ENCODE measurements at regions of chr7 and their contacts with region 1.

Region 1: DNA sequence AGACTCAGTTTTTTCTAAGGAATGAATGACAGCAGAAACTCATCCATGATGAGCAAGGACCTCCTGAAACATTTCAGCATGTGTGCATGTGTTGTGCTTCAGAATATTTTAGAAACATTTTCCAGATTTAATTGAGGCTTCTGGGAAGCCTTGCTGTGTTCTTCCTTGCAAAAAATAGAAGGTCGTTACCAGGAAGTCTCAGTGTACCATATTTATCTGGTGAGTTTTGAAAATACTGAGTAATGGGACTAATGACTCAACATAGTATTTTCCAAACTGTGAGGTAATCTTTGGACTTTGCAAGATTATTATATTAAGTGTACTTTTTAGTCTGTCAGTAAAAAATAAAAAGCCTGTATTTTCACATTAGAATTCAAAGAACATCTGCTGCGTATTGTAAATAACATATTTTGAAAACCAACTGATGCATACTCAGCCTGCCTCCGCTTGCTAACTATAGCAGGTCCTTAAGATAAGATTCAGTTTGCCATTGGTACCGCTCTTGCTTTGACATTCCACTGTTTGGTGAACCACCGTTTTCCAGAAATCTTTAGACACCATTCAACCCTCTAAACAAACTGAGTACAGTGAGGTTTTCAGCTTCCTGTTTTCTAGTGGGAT is 739.6 kb upstream of the GALNT17 start:
- DNase-seq: no peak
- H3K4me3 ChIP-seq: peak overlapping the region in 1 of 2 donors; percentile 13
- H3K27ac ChIP-seq: peak overlapping the region; percentile 88 to 89
- H3K4me1 ChIP-seq: peaks cover 3 to 47% of the 10 kb centered on the region in 2 donors
- H3K27me3 ChIP-seq: no peaks in the 10 kb centered on the region
- CTCF ChIP-seq: no peak

Region 2: GRCh38 chr7:70316786-70317755 is 75.3 kb before region 1 on chr7:
- intact Hi-C with region 1: loop called (anchors 5 kb)
- DNase-seq: no peak
- H3K4me3 ChIP-seq: no peak overlapping the region
- H3K27ac ChIP-seq: peak overlapping the region in 1 of 2 donors; percentile 5
- H3K4me1 ChIP-seq: peaks cover 0 to 7% of the 10 kb centered on the region in 2 donors
- H3K27me3 ChIP-seq: no peaks in the 10 kb centered on the region
- CTCF ChIP-seq: no peak

Region 3: DNA sequence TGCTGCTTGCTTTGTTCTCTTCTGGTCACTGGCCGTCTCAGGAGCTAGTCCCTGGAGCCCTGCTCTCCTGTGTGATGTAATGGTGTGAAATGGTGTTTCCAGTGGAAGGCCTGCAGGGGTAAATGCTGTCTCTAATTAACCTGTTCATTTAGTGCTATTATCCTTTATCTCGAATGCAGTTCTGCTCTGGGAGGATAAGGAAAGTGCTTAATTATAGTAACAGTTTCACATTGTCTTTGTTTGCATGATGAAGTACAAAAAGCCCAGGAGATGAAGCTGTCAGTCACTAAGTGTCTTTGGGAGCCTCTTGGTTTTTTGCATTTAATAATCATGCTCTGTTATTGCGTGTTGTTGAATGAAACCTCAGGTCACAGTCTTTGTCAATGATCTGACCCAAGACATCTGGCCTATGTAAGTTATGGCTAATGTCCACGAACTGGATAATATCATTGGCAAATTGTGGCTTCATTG is 15.8 kb before region 1 on chr7:
- intact Hi-C with region 1: loop called (anchors 1 kb)
- DNase-seq: no peak
- H3K4me3 ChIP-seq: no peak overlapping the region
- H3K27ac ChIP-seq: no peak overlapping the region
- H3K4me1 ChIP-seq: peaks cover 3 to 25% of the 10 kb centered on the region in 2 donors
- H3K27me3 ChIP-seq: no peaks in the 10 kb centered on the region
- CTCF ChIP-seq: no peak

Measured in ascending aorta (tissue), 2 donors.